ENCODE measurements at regions of chr9 and their contacts with region 1.

Region 1: GRCh38 chr9:82616545-82616944 is 446.4 kb downstream of the RASEF start:
- DNase-seq: no peak
- ATAC-seq: no peak
- H3K4me3 Mint-ChIP-seq: no peak overlapping the region
- H3K27ac Mint-ChIP-seq: no peak overlapping the region
- H3K4me1 Mint-ChIP-seq: no peaks in the 10 kb centered on the region
- H3K27me3 Mint-ChIP-seq: no peaks in the 10 kb centered on the region

Region 2: GRCh38 chr9:82565188-82565969 is 51.2 kb before region 1 on chr9:
- CTCF ChIA-PET with region 1: no interaction called
- POLR2A ChIA-PET with region 1: no interaction called
- intact Hi-C with region 1: loop called in 1 of 2 experiments (anchors 5 kb)
- DNase-seq: no peak
- ATAC-seq: no peak
- H3K4me3 Mint-ChIP-seq: no peak overlapping the region
- H3K27ac Mint-ChIP-seq: no peak overlapping the region
- H3K4me1 Mint-ChIP-seq: no peaks in the 10 kb centered on the region
- H3K27me3 Mint-ChIP-seq: no peaks in the 10 kb centered on the region

Measured in activated CD4-positive, alpha-beta T cell treated with anti-CD3 and anti-CD28 coated beads for 36 hours (primary cell).